Dorsolateral prefrontal cortex (tissue), 120 donors: ENCODE measurements at regions of chr2 and their contacts with region 1.

Region 1: DNA sequence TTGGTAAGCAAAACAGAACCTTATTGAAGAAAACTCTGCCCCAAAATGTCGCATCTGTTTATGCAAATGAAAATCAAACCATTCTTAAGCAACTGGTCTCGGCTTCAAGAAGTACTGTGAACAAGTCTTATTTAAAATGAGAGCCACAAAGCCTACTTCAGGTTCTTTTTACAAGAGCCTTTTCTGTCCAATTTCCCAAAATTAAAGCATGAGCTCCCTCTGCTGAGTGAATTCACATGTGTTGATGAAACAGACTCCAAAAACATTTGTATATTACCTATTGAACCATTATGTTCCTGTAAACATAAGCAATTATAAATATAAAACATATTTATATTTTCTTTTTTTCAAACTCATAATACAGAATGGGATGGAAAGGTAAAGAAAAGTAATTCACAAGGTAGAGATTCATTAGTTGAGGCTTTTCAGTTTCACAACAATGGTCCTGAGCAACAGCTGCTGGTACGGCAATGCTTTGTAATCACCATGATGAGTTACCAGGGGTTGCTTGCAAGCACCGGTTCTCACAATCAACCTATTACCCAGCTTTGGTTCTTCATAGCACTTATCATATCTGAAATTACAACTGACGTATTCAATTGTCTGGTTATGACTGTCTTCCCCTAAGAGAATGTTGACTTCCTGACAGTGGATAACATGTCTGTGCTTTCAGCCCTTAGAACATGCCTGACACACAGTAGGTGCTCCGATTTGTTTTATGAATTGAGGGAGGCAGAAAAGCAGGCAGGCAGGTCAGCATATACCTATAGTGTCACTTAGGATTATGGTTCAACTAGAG is 108.4 kb upstream of the BZW1 start:
- DNase-seq: no peak
- H3K4me3 ChIP-seq: peak overlapping the region in 3 of 59 donors; percentile 2 to 4 (median 4)
- H3K27ac ChIP-seq: peak overlapping the region in 55 of 59 donors; percentile 1 to 95 (median 84)
- H3K27me3 ChIP-seq: no peaks in the 10 kb centered on the region
- CTCF ChIP-seq: peak; percentile 39 to 88 (median 72)

Region 2: DNA sequence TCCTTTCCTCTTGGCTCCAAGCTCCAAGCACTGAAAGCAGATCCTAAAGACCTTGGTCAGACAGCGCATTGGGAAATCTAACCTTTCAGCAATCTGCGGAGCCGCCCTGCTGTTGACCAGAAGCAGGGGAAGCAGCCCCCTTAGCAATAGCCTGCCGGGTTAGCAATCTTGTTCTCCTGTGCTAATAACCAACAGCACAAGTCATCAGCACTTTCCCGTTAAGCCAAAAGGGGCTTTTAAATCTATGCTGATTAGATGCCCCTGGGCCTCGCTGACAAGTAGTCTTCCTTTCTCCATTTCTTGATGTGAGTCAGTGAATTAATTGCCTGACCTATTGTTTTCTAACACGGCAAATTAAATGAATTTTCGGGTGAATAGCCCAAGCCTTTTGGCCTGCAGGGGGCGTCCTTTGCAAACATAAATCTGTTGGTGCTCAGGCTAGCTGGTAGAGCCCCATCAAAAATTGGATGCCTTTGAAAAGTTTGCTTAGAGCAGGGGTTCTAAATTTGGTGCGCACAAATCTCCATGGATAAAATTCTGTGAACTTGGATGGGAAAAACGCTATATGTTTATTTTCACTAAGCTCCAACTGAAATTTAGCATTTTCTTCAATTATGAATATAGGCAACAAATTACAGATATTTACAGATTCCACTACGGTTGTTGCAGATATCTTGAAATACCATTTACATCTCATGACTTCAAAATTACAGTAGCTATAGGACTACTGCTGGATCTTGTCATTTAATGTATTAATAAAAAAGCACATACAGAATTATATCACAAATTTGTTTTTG is 723.3 kb before region 1 on chr2:
- intact Hi-C with region 1: loop called (anchors 5 to 10 kb)
- DNase-seq: peak; percentile 78 to 95 (median 89)
- H3K4me3 ChIP-seq: peak overlapping the region in 55 of 59 donors; percentile 11 to 66 (median 43)
- H3K27ac ChIP-seq: peak overlapping the region in 15 of 59 donors; percentile 1 to 65 (median 24)
- H3K27me3 ChIP-seq: no peaks in the 10 kb centered on the region
- CTCF ChIP-seq: peak; percentile 85 to 99 (median 94)

Region 3: GRCh38 chr2:200471324-200471848 is 231.9 kb before region 1 on chr2:
- intact Hi-C with region 1: loop called in 1 of 2 experiments (anchors 10 kb)
- DNase-seq: peak in 5 of 10 donors; percentile 48 to 57 (median 55)
- H3K4me3 ChIP-seq: peak overlapping the region in 2 of 59 donors; percentile 45
- H3K27ac ChIP-seq: peak overlapping the region; percentile 23 to 99 (median 94)
- H3K27me3 ChIP-seq: no peaks in the 10 kb centered on the region
- CTCF ChIP-seq: peak; percentile 23 to 82 (median 70)

Region 4: GRCh38 chr2:200525882-200526651 is 177.3 kb before region 1 on chr2 and contains the start of gene SGO2:
- intact Hi-C with region 1: loop called in 1 of 2 experiments (anchors 10 kb)
- DNase-seq: peak; percentile 87 to 97 (median 95)
- H3K4me3 ChIP-seq: peak within 1 kb of the TSS; percentile 66 to 100 (median 84)
- H3K27ac ChIP-seq: peak within 1 kb of the TSS in 44 of 59 donors; percentile 0 to 84 (median 62)
- H3K27me3 ChIP-seq: no peaks in the 10 kb centered on the region
- CTCF ChIP-seq: peak in 37 of 56 donors; percentile 7 to 59 (median 30)
- total RNA-seq, gene SGO2: 1.7 to 6.1 (median 3.1) TPM

Region 5: GRCh38 chr2:200585730-200586643 is 117.3 kb before region 1 on chr2 and contains the start of gene AOX1:
- intact Hi-C with region 1: loop called in 1 of 2 experiments (anchors 5 kb)
- DNase-seq: peak in 7 of 10 donors; percentile 15 to 50 (median 25)
- H3K4me3 ChIP-seq: peak within 1 kb of the TSS; percentile 30 to 84 (median 66)
- H3K27ac ChIP-seq: peak within 1 kb of the TSS in 12 of 59 donors; percentile 12 to 68 (median 58)
- H3K27me3 ChIP-seq: peaks cover 0 to 7% (median 0%) of the 10 kb centered on the region in 45 donors
- CTCF ChIP-seq: peak in 19 of 56 donors; percentile 7 to 44 (median 22)
- total RNA-seq, gene AOX1: 0.39 to 8.4 (median 1.9) TPM

Region 6: GRCh38 chr2:200618587-200619021 is 84.7 kb before region 1 on chr2:
- intact Hi-C with region 1: loop called in 1 of 2 experiments (anchors 1 kb)
- DNase-seq: peak in 2 of 10 donors; percentile 20 to 43
- H3K4me3 ChIP-seq: no peak overlapping the region
- H3K27ac ChIP-seq: peak overlapping the region in 10 of 59 donors; percentile 9 to 64 (median 36)
- H3K27me3 ChIP-seq: no peaks in the 10 kb centered on the region
- CTCF ChIP-seq: peak in 46 of 56 donors; percentile 12 to 71 (median 39)

Region 7: GRCh38 chr2:200670313-200670712 is 33.0 kb before region 1 on chr2:
- intact Hi-C with region 1: no loop called
- DNase-seq: no peak
- H3K4me3 ChIP-seq: no peak overlapping the region
- H3K27ac ChIP-seq: no peak overlapping the region
- H3K27me3 ChIP-seq: no peaks in the 10 kb centered on the region
- CTCF ChIP-seq: no peak